GM12878 (cell line): ENCODE measurements at regions of chr5 and their contacts with region 1.

Region 1: GRCh38 chr5:150155258-150156026 is at the start of gene PDGFRB:
- DNase-seq: no peak
- ATAC-seq: peak; percentile 84
- H3K4me3 ChIP-seq: peak within 1 kb of the TSS; percentile 74
- H3K27ac ChIP-seq: no peak within 1 kb of the TSS
- H3K4me1 ChIP-seq: peaks cover 12% of the 10 kb centered on the region
- H3K27me3 ChIP-seq: no peaks in the 10 kb centered on the region
- CTCF ChIP-seq: no peak
- EP300 ChIP-seq: no peak
- POLR2A ChIP-seq: no peak
- RAD21 ChIP-seq: no peak
- polyA plus RNA-seq, gene PDGFRB: 0.02 to 0.16 TPM

Region 2: DNA sequence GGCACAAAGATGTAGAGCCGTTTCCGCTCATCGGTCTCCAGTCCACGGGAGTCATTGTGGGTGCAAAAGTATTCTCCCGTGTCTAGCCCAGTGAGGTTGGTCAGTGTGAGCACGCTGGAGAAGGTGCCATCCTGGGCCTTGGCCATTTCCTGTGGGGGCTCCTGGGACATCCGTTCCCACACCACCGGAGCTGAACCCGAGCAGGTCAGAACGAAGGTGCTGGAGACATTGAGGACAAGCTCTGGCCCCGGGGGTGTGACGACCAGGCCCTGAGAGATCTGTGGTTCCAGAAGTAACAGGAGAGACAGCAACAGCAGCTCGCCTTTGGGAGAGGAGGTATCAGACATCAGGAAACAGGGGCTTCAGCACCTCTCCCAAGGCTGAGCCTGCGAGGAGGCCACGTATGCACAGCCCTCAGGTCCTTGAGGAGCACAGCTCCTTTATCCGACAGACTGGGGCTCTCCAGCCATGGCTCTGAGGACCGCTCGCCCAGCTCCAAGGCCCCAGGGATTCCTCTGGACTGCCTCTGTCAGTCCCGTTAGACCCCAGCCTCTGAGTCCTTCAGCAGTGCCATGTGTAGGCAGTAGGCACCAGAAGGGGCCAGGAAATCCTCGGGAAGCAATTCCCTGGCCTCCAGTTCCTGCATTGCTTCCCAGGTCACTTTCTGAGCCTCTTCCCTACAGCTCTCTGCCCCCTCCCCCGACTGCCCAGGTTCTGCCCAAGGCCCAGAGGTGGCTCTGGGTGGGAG is 19.7 kb before region 1 on chr5:
- CTCF ChIA-PET with region 1: interaction called, 13 read pairs
- POLR2A ChIA-PET with region 1: interaction called, 3 read pairs
- RAD21 ChIA-PET with region 1: interaction called, 4 read pairs
- SMC1A ChIA-PET with region 1: interaction called, 3 read pairs
- in situ Hi-C with region 1: no loop called
- intact Hi-C with region 1: no loop called
- DNase-seq: no peak
- ATAC-seq: no peak
- H3K4me3 ChIP-seq: no peak overlapping the region
- H3K27ac ChIP-seq: no peak overlapping the region
- H3K4me1 ChIP-seq: no peaks in the 10 kb centered on the region
- H3K27me3 ChIP-seq: no peaks in the 10 kb centered on the region
- CTCF ChIP-seq: no peak
- EP300 ChIP-seq: no peak
- POLR2A ChIP-seq: no peak
- RAD21 ChIP-seq: no peak

Region 3: DNA sequence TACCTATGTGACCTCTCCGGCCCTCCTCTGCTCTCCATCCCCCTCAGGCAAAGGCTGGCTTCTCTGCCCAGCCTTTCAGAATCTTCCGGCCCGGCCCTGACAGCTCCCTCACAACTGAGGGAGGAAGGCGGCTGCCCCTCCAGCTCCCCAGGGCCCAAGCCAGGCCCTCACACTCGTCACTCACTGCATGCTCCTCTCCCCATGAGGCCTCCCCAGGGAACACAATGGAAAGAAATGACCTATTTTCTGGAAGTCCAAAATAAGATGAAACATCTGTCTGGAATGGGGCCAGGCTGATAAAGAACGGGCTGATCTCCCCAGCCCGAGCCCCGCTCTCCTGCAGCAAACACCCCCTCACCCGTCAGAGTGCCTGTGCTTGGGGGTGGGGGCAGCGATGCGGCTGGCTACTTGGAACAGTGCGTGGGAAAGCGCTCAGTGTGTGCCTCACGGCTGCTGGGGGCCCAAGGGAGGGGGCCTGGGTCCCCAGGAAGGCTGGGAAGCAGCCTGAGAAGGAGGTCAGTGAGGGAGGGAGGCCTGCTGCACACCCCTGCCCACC is 11.1 kb before region 1 on chr5:
- CTCF ChIA-PET with region 1: interaction called, 11 read pairs
- POLR2A ChIA-PET with region 1: interaction called, 5 read pairs
- RAD21 ChIA-PET with region 1: interaction called, 13 read pairs
- SMC1A ChIA-PET with region 1: interaction called, 5 read pairs
- in situ Hi-C with region 1: no loop called
- intact Hi-C with region 1: no loop called
- DNase-seq: no peak
- ATAC-seq: no peak
- H3K4me3 ChIP-seq: no peak overlapping the region
- H3K27ac ChIP-seq: no peak overlapping the region
- H3K4me1 ChIP-seq: no peaks in the 10 kb centered on the region
- H3K27me3 ChIP-seq: no peaks in the 10 kb centered on the region
- CTCF ChIP-seq: no peak
- EP300 ChIP-seq: no peak
- POLR2A ChIP-seq: no peak
- RAD21 ChIP-seq: no peak

Region 4: GRCh38 chr5:150320048-150320555 is 164.7 kb after region 1 on chr5:
- CTCF ChIA-PET with region 1: no interaction called
- POLR2A ChIA-PET with region 1: no interaction called
- RAD21 ChIA-PET with region 1: no interaction called
- SMC1A ChIA-PET with region 1: no interaction called
- in situ Hi-C with region 1: no loop called
- intact Hi-C with region 1: no loop called
- DNase-seq: no peak
- ATAC-seq: no peak
- H3K4me3 ChIP-seq: no peak overlapping the region
- H3K27ac ChIP-seq: no peak overlapping the region
- H3K4me1 ChIP-seq: no peaks in the 10 kb centered on the region
- H3K27me3 ChIP-seq: peaks cover 2 to 4% of the 10 kb centered on the region in 2 experiments; a peak in 1 of 4 replicates
- CTCF ChIP-seq: no peak
- EP300 ChIP-seq: no peak
- POLR2A ChIP-seq: no peak
- RAD21 ChIP-seq: no peak